ENCODE measurements at regions of chr1 and their contacts with region 1.

Region 1: GRCh38 chr1:176157995-176158394 is 49.1 kb downstream of the COP1 start:
- DNase-seq: no peak
- ATAC-seq: no peak
- H3K4me3 ChIP-seq: no peak overlapping the region
- H3K4me3 Mint-ChIP-seq: no peak overlapping the region
- H3K27ac ChIP-seq: no peak overlapping the region
- H3K27ac Mint-ChIP-seq: no peak overlapping the region
- H3K4me1 ChIP-seq: no peaks in the 10 kb centered on the region
- H3K4me1 Mint-ChIP-seq: peaks cover 25% of the 10 kb centered on the region
- H3K27me3 ChIP-seq: no peaks in the 10 kb centered on the region
- H3K27me3 Mint-ChIP-seq: no peaks in the 10 kb centered on the region
- CTCF ChIP-seq: no peak

Region 2: GRCh38 chr1:176174108-176174507 is 16.1 kb after region 1 on chr1:
- CTCF ChIA-PET with region 1: no interaction called
- POLR2A ChIA-PET with region 1: interaction called, 3 read pairs
- intact Hi-C with region 1: loop called in 1 of 2 experiments (anchors 2 kb)
- DNase-seq: no peak
- ATAC-seq: no peak
- H3K4me3 ChIP-seq: no peak overlapping the region
- H3K4me3 Mint-ChIP-seq: no peak overlapping the region
- H3K27ac ChIP-seq: no peak overlapping the region
- H3K27ac Mint-ChIP-seq: peak overlapping the region; percentile 13
- H3K4me1 ChIP-seq: no peaks in the 10 kb centered on the region
- H3K4me1 Mint-ChIP-seq: peaks cover 33% of the 10 kb centered on the region
- H3K27me3 ChIP-seq: no peaks in the 10 kb centered on the region
- H3K27me3 Mint-ChIP-seq: no peaks in the 10 kb centered on the region
- CTCF ChIP-seq: no peak

Region 3: DNA sequence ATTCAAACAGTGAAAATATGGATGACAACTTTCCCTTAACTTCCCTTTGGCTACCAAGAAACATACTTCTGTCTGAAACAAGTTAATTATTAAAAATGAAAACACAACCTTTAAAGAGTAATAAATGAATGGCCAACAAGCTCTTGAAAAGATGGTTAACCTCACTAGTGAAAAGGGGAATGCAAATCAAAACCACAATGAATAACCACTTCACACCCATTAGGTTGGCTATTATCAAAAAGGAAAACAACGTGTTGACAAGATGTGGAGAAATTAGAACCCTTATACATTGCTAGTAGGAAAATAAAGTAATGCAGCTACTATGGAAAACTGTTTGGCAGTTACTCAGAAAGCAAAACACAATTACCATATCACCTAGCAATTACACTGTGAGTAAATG is 35.0 kb after region 1 on chr1:
- CTCF ChIA-PET with region 1: no interaction called
- POLR2A ChIA-PET with region 1: no interaction called
- intact Hi-C with region 1: loop called in 1 of 2 experiments (anchors 5 kb)
- DNase-seq: peak in 1 of 9 experiments; percentile 13
- ATAC-seq: no peak
- H3K4me3 ChIP-seq: no peak overlapping the region
- H3K4me3 Mint-ChIP-seq: no peak overlapping the region
- H3K27ac ChIP-seq: no peak overlapping the region
- H3K27ac Mint-ChIP-seq: no peak overlapping the region
- H3K4me1 ChIP-seq: peaks cover 22% of the 10 kb centered on the region
- H3K4me1 Mint-ChIP-seq: peaks cover 81% of the 10 kb centered on the region
- H3K27me3 ChIP-seq: no peaks in the 10 kb centered on the region
- H3K27me3 Mint-ChIP-seq: no peaks in the 10 kb centered on the region
- CTCF ChIP-seq: no peak

Measured in CD8-positive, alpha-beta T cell (primary cell).